ENCODE measurements at regions of chr10 and their contacts with region 1.

Region 1: GRCh38 chr10:78972947-78973900 is 95.5 kb upstream of the ZMIZ1 start:
- DNase-seq: peak; percentile 89 to 93
- H3K4me3 ChIP-seq: peak overlapping the region; percentile 59
- H3K27ac ChIP-seq: peak overlapping the region; percentile 94
- H3K4me1 ChIP-seq: peaks cover 58% of the 10 kb centered on the region
- H3K27me3 ChIP-seq: no peaks in the 10 kb centered on the region
- CTCF ChIP-seq: no peak

Region 2: DNA sequence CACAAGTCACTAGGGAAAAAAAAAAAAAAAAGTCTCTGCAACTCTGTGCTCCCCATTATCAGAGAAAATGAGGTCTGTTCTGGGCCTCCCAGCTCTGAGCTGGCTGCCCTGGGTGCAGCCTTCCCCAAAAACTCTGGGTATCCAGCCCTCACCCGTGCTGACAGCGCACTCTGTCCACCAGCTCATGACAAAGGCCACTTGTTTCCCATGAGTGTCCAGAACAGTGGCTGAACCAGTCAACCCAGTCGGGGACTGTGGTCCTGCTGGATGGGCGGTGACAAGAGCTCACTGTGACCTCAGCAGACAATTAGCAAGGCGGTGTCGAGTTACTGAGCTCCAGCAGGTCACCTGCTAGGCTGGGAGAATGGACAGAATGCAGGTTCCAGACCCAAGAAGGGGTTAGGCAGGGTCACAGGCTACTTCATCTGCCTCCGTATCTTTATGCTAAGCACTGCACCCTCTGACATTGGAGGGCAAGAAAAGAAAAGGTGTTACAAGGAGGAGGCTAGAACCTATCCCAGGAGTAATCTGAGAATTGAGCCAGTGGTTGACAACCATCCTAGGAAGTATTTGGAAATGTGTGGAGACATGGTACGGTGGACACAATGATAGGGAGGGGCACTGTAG is 1083.8 kb before region 1 on chr10:
- CTCF ChIA-PET with region 1: no interaction called
- POLR2A ChIA-PET with region 1: interaction called, 13 read pairs
- intact Hi-C with region 1: no loop called
- DNase-seq: peak; percentile 93 to 97
- H3K4me3 ChIP-seq: no peak overlapping the region
- H3K27ac ChIP-seq: peak overlapping the region; percentile 73
- H3K4me1 ChIP-seq: peaks cover 34% of the 10 kb centered on the region
- H3K27me3 ChIP-seq: no peaks in the 10 kb centered on the region
- CTCF ChIP-seq: no peak

Region 3: DNA sequence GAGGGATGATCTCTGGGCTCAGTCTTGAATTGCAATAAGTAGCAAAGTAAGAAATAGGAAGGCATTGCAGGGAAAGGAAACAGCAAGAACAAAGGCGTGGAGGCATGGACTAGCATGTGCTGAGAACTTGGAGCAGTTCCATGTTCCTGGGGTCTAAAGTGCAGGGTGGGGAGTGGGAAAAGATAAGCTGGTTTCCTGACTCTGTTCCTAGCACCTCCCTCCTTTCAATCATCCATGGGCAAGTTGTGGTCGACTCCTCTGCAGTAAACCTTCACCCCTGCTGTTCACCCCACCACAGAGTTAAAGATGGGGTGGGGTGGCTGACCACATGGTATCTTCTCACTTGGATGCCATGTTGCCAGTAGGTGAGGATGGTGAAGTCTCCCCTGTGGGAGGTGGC is 910.0 kb before region 1 on chr10:
- CTCF ChIA-PET with region 1: no interaction called
- POLR2A ChIA-PET with region 1: interaction called, 22 read pairs
- intact Hi-C with region 1: no loop called
- DNase-seq: no peak
- H3K4me3 ChIP-seq: no peak overlapping the region
- H3K27ac ChIP-seq: no peak overlapping the region
- H3K4me1 ChIP-seq: no peaks in the 10 kb centered on the region
- H3K27me3 ChIP-seq: no peaks in the 10 kb centered on the region; the same call in none of the 2 replicates
- CTCF ChIP-seq: no peak

Region 4: DNA sequence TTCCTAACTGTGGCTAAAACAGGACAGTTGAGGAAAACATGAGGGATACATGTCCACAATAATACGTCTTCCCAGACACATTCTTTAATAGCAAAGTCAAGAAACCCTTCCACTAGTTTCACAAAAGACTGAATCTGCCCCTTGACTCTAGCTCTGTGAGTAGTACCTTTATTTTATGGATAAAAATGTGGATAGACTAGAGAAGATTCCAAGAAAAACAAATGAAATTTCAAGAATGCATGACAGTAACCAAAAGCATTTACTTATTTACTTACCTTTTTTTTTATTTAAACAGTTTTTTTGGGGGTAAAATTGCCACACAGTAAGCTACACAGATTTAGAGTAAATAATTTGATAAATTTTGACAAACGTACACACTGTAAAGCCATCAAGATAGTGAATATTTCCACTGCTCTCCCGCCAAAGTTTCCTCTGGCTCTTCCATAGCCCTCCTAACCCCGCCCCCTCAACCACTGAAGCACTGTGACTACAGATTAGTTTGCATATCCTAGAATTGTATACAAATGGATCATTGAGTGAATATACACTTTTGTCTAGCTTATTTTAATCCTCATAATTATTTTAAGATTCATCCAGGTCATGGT is 324.9 kb before region 1 on chr10:
- CTCF ChIA-PET with region 1: no interaction called
- POLR2A ChIA-PET with region 1: no interaction called
- intact Hi-C with region 1: no loop called
- DNase-seq: peak in 1 of 2 experiments; percentile 73
- H3K4me3 ChIP-seq: no peak overlapping the region
- H3K27ac ChIP-seq: no peak overlapping the region
- H3K4me1 ChIP-seq: peaks cover 17% of the 10 kb centered on the region
- H3K27me3 ChIP-seq: no peaks in the 10 kb centered on the region
- CTCF ChIP-seq: no peak

Region 5: GRCh38 chr10:78777466-78777865 is 195.8 kb before region 1 on chr10:
- CTCF ChIA-PET with region 1: no interaction called
- POLR2A ChIA-PET with region 1: no interaction called
- intact Hi-C with region 1: loop called (anchors 1 kb)
- DNase-seq: no peak
- H3K4me3 ChIP-seq: no peak overlapping the region
- H3K27ac ChIP-seq: no peak overlapping the region
- H3K4me1 ChIP-seq: peaks cover 20% of the 10 kb centered on the region
- H3K27me3 ChIP-seq: no peaks in the 10 kb centered on the region
- CTCF ChIP-seq: no peak

Region 6: GRCh38 chr10:78798976-78799730 is 174.1 kb before region 1 on chr10:
- CTCF ChIA-PET with region 1: no interaction called
- POLR2A ChIA-PET with region 1: no interaction called
- intact Hi-C with region 1: loop called (anchors 5 kb)
- DNase-seq: peak; percentile 40 to 68
- H3K4me3 ChIP-seq: no peak overlapping the region
- H3K27ac ChIP-seq: no peak overlapping the region
- H3K4me1 ChIP-seq: peaks cover 30% of the 10 kb centered on the region
- H3K27me3 ChIP-seq: no peaks in the 10 kb centered on the region
- CTCF ChIP-seq: no peak

Region 7: GRCh38 chr10:79149662-79150443 is 176.6 kb after region 1 on chr10:
- CTCF ChIA-PET with region 1: no interaction called
- POLR2A ChIA-PET with region 1: no interaction called
- intact Hi-C with region 1: loop called (anchors 1 kb)
- DNase-seq: peak; percentile 92 to 99
- H3K4me3 ChIP-seq: peak overlapping the region; percentile 29; the same call in 1 of the 2 replicates
- H3K27ac ChIP-seq: peak overlapping the region; percentile 90
- H3K4me1 ChIP-seq: peaks cover 62% of the 10 kb centered on the region
- H3K27me3 ChIP-seq: no peaks in the 10 kb centered on the region
- CTCF ChIP-seq: no peak

Measured in PC-9 (cell line).